ENCODE measurements at regions of chr2 and their contacts with region 1.

Region 1: DNA sequence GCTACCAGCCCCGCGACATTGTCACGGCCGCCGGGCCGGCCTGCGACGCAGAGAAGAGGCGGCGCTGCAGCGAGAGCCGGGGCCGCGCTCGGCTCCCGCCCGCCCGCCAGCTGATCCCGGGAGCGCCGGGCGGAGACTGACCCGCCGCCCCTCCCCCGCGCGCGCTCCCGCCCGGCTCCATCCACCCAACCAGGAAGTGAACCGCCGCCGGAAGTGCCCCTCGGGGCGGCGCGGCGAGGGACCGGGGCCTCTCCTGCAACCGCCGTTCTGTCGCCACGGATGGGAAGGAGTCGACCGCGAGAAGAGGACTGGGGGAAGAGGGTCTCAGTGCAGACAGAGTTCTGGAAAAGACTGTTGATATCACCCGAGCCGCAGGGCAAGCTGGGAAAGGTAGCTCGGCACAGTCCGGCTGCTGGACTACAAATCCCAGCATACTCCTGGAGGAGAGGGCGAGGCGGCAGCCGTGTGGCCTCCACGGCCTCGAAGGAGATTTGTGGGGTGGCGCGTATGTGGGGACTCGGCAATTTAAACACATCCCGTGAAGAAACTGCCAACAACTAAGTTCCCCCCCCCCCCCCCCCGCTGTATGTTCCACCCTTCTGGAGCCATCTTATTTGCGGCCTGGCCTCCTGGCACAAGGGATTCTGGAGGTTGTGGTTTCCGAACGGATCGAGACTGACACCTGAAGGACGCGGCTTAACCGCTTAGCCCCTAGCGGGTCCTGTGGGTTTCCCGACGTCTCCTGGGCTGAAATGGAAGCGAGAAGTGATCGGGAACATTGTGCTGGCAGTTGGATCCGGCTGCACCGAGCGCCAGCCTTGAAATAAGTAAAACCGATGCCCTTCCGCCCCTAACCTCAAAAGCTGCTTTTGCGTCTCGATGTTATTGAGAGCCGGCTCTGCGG is at the start of gene AAK1:
- DNase-seq: peak; percentile 89
- ATAC-seq: peak; percentile 69
- H3K4me3 ChIP-seq: peak within 1 kb of the TSS; percentile 63 to 99 (median 91)
- H3K4me3 Mint-ChIP-seq: peak within 1 kb of the TSS; percentile 95
- H3K27ac ChIP-seq: peak within 1 kb of the TSS in 1 of 2 donors; percentile 16
- H3K27ac Mint-ChIP-seq: peak within 1 kb of the TSS; percentile 94
- H3K4me1 ChIP-seq: peaks cover 42 to 51% of the 10 kb centered on the region in 2 donors
- H3K4me1 Mint-ChIP-seq: peaks cover 44% of the 10 kb centered on the region
- H3K27me3 ChIP-seq: peaks cover 4 to 74% (median 55%) of the 10 kb centered on the region in 4 experiments
- H3K27me3 Mint-ChIP-seq: peaks cover 73% of the 10 kb centered on the region
- CTCF ChIP-seq: no peak
- total RNA-seq, gene AAK1: 7.2 and 8.4 TPM in 2 replicates

Region 2: GRCh38 chr2:69386789-69387734 is 256.8 kb before region 1 on chr2 and contains the start of gene GFPT1:
- CTCF ChIA-PET with region 1: no interaction called
- POLR2A ChIA-PET with region 1: no interaction called
- intact Hi-C with region 1: loop called (anchors 2 kb)
- DNase-seq: peak; percentile 94
- ATAC-seq: peak; percentile 97
- H3K4me3 ChIP-seq: peak within 1 kb of the TSS; percentile 52 to 90 (median 82)
- H3K4me3 Mint-ChIP-seq: peak within 1 kb of the TSS; percentile 90
- H3K27ac ChIP-seq: peak within 1 kb of the TSS; percentile 62 to 70
- H3K27ac Mint-ChIP-seq: peak within 1 kb of the TSS; percentile 85
- H3K4me1 ChIP-seq: peaks cover 15 to 16% of the 10 kb centered on the region in 2 donors
- H3K4me1 Mint-ChIP-seq: peaks cover 30% of the 10 kb centered on the region
- H3K27me3 ChIP-seq: no peaks in the 10 kb centered on the region
- H3K27me3 Mint-ChIP-seq: no peaks in the 10 kb centered on the region
- CTCF ChIP-seq: no peak
- total RNA-seq, gene GFPT1: 15.0 and 18.1 TPM in 2 replicates

Region 3: GRCh38 chr2:69436938-69437750 is 206.7 kb before region 1 on chr2 and contains the start of gene NFU1:
- CTCF ChIA-PET with region 1: no interaction called
- POLR2A ChIA-PET with region 1: interaction called, 8 read pairs
- intact Hi-C with region 1: loop called (anchors 5 kb)
- DNase-seq: peak; percentile 94
- ATAC-seq: peak; percentile 94
- H3K4me3 ChIP-seq: peak within 1 kb of the TSS; percentile 67 to 92 (median 78)
- H3K4me3 Mint-ChIP-seq: peak within 1 kb of the TSS; percentile 97
- H3K27ac ChIP-seq: peak within 1 kb of the TSS; percentile 91 to 93
- H3K27ac Mint-ChIP-seq: peak within 1 kb of the TSS; percentile 99
- H3K4me1 ChIP-seq: peaks cover 27 to 33% of the 10 kb centered on the region in 2 donors
- H3K4me1 Mint-ChIP-seq: peaks cover 41% of the 10 kb centered on the region
- H3K27me3 ChIP-seq: no peaks in the 10 kb centered on the region
- H3K27me3 Mint-ChIP-seq: no peaks in the 10 kb centered on the region
- CTCF ChIP-seq: peak; percentile 74
- total RNA-seq, gene NFU1: 33.8 and 40.6 TPM in 2 replicates

Region 4: DNA sequence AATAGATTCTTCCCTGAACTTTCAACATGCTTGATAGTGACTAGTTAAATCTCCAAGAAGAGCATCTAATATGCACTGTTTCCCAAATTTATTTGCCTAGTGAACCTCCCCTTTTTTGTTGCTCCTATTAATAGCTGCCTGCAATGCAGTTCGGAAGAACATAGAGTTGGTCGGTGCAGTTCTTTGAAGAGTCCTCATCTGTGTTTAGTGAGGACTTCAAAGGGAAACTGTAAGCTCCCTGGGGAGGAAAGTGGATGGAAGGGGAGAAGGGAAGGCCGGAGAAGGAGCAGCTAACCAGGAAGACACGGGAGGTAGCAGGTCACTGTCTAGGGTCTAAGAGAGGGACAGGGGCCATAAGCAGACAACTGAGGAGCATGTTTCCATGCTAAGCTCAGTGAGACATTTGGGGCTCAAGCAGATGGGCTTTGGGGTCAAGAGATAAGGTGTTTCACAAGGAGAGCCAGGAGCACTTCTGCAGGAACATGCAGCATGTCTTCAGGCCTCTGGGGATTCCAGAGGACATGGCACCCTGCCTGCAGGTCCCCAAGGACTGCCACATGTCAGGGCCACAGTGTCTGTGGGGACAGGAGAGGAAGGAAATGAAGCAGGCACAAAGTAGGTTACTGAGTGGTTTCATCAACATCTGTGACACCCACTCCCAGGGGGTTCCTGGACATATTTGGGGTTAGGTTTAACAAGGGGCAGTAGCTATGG is 49.4 kb after region 1 on chr2:
- CTCF ChIA-PET with region 1: interaction called, 10 read pairs
- POLR2A ChIA-PET with region 1: interaction called, 3 read pairs
- intact Hi-C with region 1: loop called (anchors 1 kb)
- DNase-seq: peak; percentile 81
- ATAC-seq: peak; percentile 97
- H3K4me3 ChIP-seq: peak overlapping the region in 2 of 5 experiments; percentile 16 to 45
- H3K4me3 Mint-ChIP-seq: peak overlapping the region; percentile 68
- H3K27ac ChIP-seq: peak overlapping the region in 1 of 2 donors; percentile 73
- H3K27ac Mint-ChIP-seq: peak overlapping the region; percentile 2
- H3K4me1 ChIP-seq: peaks cover 29 to 30% of the 10 kb centered on the region in 2 donors
- H3K4me1 Mint-ChIP-seq: peaks cover 35% of the 10 kb centered on the region
- H3K27me3 ChIP-seq: peaks cover 0 to 47% (median 27%) of the 10 kb centered on the region in 4 experiments
- H3K27me3 Mint-ChIP-seq: peaks cover 47% of the 10 kb centered on the region
- CTCF ChIP-seq: no peak

Region 5: GRCh38 chr2:69717861-69718273 is 74.0 kb after region 1 on chr2:
- CTCF ChIA-PET with region 1: no interaction called
- POLR2A ChIA-PET with region 1: no interaction called
- intact Hi-C with region 1: loop called (anchors 5 kb)
- DNase-seq: no peak
- ATAC-seq: no peak
- H3K4me3 ChIP-seq: no peak overlapping the region
- H3K4me3 Mint-ChIP-seq: no peak overlapping the region
- H3K27ac ChIP-seq: no peak overlapping the region
- H3K27ac Mint-ChIP-seq: no peak overlapping the region
- H3K4me1 ChIP-seq: peaks cover 0 to 6% of the 10 kb centered on the region in 2 donors
- H3K4me1 Mint-ChIP-seq: peaks cover 2% of the 10 kb centered on the region
- H3K27me3 ChIP-seq: peaks cover 0 to 39% (median 11%) of the 10 kb centered on the region in 4 experiments
- H3K27me3 Mint-ChIP-seq: peaks cover 42% of the 10 kb centered on the region
- CTCF ChIP-seq: no peak

Region 6: GRCh38 chr2:69829256-69830046 is 185.6 kb after region 1 on chr2 and contains the start of gene GMCL1:
- CTCF ChIA-PET with region 1: interaction called, 3 read pairs
- POLR2A ChIA-PET with region 1: no interaction called
- intact Hi-C with region 1: loop called (anchors 2 kb)
- DNase-seq: peak; percentile 99
- ATAC-seq: peak; percentile 96
- H3K4me3 ChIP-seq: peak within 1 kb of the TSS; percentile 46 to 97 (median 72)
- H3K4me3 Mint-ChIP-seq: peak within 1 kb of the TSS; percentile 99
- H3K27ac ChIP-seq: peak within 1 kb of the TSS; percentile 94 to 98
- H3K27ac Mint-ChIP-seq: peak within 1 kb of the TSS; percentile 99
- H3K4me1 ChIP-seq: peaks cover 24 to 26% of the 10 kb centered on the region in 2 donors
- H3K4me1 Mint-ChIP-seq: peaks cover 38% of the 10 kb centered on the region
- H3K27me3 ChIP-seq: no peaks in the 10 kb centered on the region
- H3K27me3 Mint-ChIP-seq: no peaks in the 10 kb centered on the region
- CTCF ChIP-seq: no peak
- total RNA-seq, gene GMCL1: 22.0 and 26.3 TPM in 2 replicates

Region 7: GRCh38 chr2:69893684-69894551 is 250.1 kb after region 1 on chr2 and contains the start of gene SNRNP27:
- CTCF ChIA-PET with region 1: no interaction called
- POLR2A ChIA-PET with region 1: no interaction called
- intact Hi-C with region 1: loop called (anchors 10 kb)
- DNase-seq: peak; percentile 85
- ATAC-seq: peak; percentile 88
- H3K4me3 ChIP-seq: peak within 1 kb of the TSS; percentile 67 to 96 (median 84)
- H3K4me3 Mint-ChIP-seq: peak within 1 kb of the TSS; percentile 98
- H3K27ac ChIP-seq: peak within 1 kb of the TSS; percentile 57 to 88
- H3K27ac Mint-ChIP-seq: peak within 1 kb of the TSS; percentile 95
- H3K4me1 ChIP-seq: peaks cover 9 to 16% of the 10 kb centered on the region in 2 donors
- H3K4me1 Mint-ChIP-seq: peaks cover 33% of the 10 kb centered on the region
- H3K27me3 ChIP-seq: no peaks in the 10 kb centered on the region
- H3K27me3 Mint-ChIP-seq: no peaks in the 10 kb centered on the region
- CTCF ChIP-seq: no peak
- total RNA-seq, gene SNRNP27: 52.0 and 54.8 TPM in 2 replicates